ENCODE measurements at regions of chr10 and their contacts with region 1.

Region 1: GRCh38 chr10:63157845-63158624 is 24.9 kb downstream of the NRBF2 start:
- DNase-seq: peak; percentile 41
- H3K4me3 Mint-ChIP-seq: no peak overlapping the region
- H3K27ac Mint-ChIP-seq: no peak overlapping the region
- H3K4me1 Mint-ChIP-seq: peaks cover 7% of the 10 kb centered on the region
- H3K27me3 Mint-ChIP-seq: no peaks in the 10 kb centered on the region

Region 2: GRCh38 chr10:62492012-62492869 is 665.8 kb before region 1 on chr10:
- CTCF ChIA-PET with region 1: interaction called, 10 read pairs
- POLR2A ChIA-PET with region 1: no interaction called
- intact Hi-C with region 1: no loop called
- DNase-seq: no peak
- H3K4me3 Mint-ChIP-seq: no peak overlapping the region
- H3K27ac Mint-ChIP-seq: no peak overlapping the region
- H3K4me1 Mint-ChIP-seq: no peaks in the 10 kb centered on the region
- H3K27me3 Mint-ChIP-seq: no peaks in the 10 kb centered on the region

Region 3: GRCh38 chr10:62594093-62594520 is 563.9 kb before region 1 on chr10:
- CTCF ChIA-PET with region 1: interaction called, 32 read pairs
- POLR2A ChIA-PET with region 1: no interaction called
- intact Hi-C with region 1: loop called (anchors 1 kb)
- DNase-seq: peak; percentile 64
- H3K4me3 Mint-ChIP-seq: no peak overlapping the region
- H3K27ac Mint-ChIP-seq: no peak overlapping the region
- H3K4me1 Mint-ChIP-seq: peaks cover 2% of the 10 kb centered on the region
- H3K27me3 Mint-ChIP-seq: peaks cover 2% of the 10 kb centered on the region

Region 4: GRCh38 chr10:63083904-63084689 is 73.9 kb before region 1 on chr10:
- CTCF ChIA-PET with region 1: interaction called, 13 read pairs
- POLR2A ChIA-PET with region 1: no interaction called
- intact Hi-C with region 1: loop called (anchors 1 kb)
- DNase-seq: peak; percentile 51
- H3K4me3 Mint-ChIP-seq: no peak overlapping the region
- H3K27ac Mint-ChIP-seq: no peak overlapping the region
- H3K4me1 Mint-ChIP-seq: peaks cover 2% of the 10 kb centered on the region
- H3K27me3 Mint-ChIP-seq: peaks cover 8% of the 10 kb centered on the region

Region 5: DNA sequence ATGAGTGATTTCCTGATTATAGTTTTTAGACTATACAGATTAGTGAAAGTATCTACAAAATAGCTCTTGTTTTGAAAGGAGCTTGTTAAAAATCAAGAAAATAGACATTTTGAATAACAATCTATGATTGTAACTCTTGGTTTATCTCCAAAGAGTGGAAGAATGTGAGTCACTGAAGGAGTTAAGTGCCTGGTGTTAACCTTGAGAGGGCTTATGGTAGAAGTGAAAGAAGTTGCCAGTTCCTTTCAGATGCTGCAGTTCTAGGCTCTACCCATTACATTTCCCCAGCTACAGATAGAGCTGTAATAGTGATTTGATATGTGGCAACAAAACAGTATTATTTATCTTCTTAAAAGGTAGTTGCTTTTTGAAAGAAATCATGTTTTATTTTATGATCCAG is 12.3 kb before region 1 on chr10:
- CTCF ChIA-PET with region 1: interaction called, 33 read pairs
- POLR2A ChIA-PET with region 1: no interaction called
- intact Hi-C with region 1: no loop called
- DNase-seq: no peak
- H3K4me3 Mint-ChIP-seq: no peak overlapping the region
- H3K27ac Mint-ChIP-seq: peak overlapping the region; percentile 38
- H3K4me1 Mint-ChIP-seq: peaks cover 44% of the 10 kb centered on the region
- H3K27me3 Mint-ChIP-seq: no peaks in the 10 kb centered on the region

Region 6: GRCh38 chr10:63481815-63482421 is 323.9 kb after region 1 on chr10:
- CTCF ChIA-PET with region 1: no interaction called
- POLR2A ChIA-PET with region 1: no interaction called
- intact Hi-C with region 1: no loop called
- DNase-seq: no peak
- H3K4me3 Mint-ChIP-seq: no peak overlapping the region
- H3K27ac Mint-ChIP-seq: no peak overlapping the region
- H3K4me1 Mint-ChIP-seq: peaks cover 22% of the 10 kb centered on the region
- H3K27me3 Mint-ChIP-seq: no peaks in the 10 kb centered on the region